A673 (cell line): ENCODE measurements at regions of chr7 and their contacts with region 1.

Region 1: GRCh38 chr7:24401628-24402593 is 117.9 kb downstream of the NPY start:
- DNase-seq: peak; percentile 41
- H3K4me3 ChIP-seq: peak overlapping the region; percentile 21
- H3K27ac ChIP-seq: no peak overlapping the region
- H3K4me1 ChIP-seq: peaks cover 39% of the 10 kb centered on the region
- H3K27me3 ChIP-seq: no peaks in the 10 kb centered on the region
- CTCF ChIP-seq: peak; percentile 65

Region 2: DNA sequence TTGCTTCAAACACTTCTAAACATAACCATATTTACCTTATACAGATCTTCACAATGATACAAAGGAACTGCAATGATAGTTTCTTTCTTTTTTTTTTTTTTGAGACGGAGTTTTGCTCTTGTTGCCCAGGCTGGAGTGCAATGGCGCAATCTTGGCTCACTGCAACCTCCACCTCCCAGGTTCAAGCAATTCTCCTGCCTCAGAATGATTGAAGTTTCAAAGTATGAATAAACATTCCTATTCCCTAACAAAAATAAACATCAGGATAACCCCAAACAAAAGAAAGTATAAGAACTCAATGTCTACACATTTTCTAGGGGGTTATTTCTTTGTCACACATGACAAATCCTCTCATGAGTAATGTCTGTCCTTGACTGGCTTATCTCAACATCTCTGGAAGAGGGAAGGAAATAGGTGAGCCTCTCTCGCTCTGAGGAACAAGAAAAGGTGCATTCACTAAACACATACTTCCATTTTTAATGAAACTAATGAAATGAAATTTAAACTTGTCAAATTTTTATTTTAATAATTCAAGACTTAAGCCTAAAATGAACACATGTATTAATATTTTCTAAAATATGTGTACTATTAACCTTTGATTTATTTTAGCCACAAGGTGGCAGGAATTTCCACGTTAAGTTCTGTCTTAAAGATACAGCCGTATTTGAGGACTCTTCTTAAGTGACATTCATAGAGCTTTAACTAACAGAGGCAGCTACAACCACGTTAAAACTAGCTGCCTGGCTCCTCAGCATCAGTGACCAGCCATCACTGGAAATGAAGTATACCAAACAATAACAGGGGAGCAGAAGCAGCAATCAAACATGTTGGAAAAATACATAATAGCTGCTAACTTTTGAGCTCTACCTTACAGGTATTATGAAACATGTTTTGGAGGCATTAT is 1044.5 kb before region 1 on chr7:
- CTCF ChIA-PET with region 1: no interaction called
- POLR2A ChIA-PET with region 1: no interaction called
- intact Hi-C with region 1: no loop called
- DNase-seq: peak; percentile 54
- H3K4me3 ChIP-seq: no peak overlapping the region
- H3K27ac ChIP-seq: no peak overlapping the region
- H3K4me1 ChIP-seq: peaks cover 4% of the 10 kb centered on the region
- H3K27me3 ChIP-seq: no peaks in the 10 kb centered on the region
- CTCF ChIP-seq: peak; percentile 60

Region 3: DNA sequence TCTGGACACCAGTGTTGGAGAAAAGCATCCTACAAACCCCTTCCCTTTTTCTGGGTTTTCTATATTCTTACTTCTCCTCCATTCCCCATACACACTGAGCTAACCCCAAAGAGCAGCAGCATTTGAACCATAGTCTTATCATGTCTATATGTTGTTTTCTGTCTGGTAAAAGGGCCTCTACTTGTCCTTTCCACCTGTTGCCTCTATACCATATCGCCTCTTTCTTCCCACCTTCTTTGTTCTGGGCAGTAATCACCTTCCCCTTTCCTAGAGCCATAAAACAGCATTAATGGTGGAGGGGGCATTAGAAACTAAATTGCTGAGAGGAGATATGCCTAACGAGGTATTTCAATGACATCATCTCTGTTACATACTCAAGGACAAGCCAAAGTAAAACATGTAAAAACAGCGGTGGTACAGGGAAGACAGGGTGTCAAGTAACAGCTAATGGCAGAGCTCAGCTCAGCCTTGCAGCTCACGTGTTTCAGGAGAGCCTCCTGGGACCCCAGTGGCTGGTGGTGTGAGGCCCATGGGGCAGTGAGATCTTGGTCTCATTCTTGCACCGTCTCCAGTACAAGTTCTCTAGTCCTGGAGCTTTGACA is 97.3 kb before region 1 on chr7:
- CTCF ChIA-PET with region 1: no interaction called
- POLR2A ChIA-PET with region 1: interaction called, 10 read pairs
- intact Hi-C with region 1: no loop called
- DNase-seq: no peak
- H3K4me3 ChIP-seq: no peak overlapping the region
- H3K27ac ChIP-seq: no peak overlapping the region
- H3K4me1 ChIP-seq: no peaks in the 10 kb centered on the region
- H3K27me3 ChIP-seq: no peaks in the 10 kb centered on the region
- CTCF ChIP-seq: no peak

Region 4: GRCh38 chr7:24477398-24478136 is 75.7 kb after region 1 on chr7:
- CTCF ChIA-PET with region 1: no interaction called
- POLR2A ChIA-PET with region 1: no interaction called
- intact Hi-C with region 1: no loop called
- DNase-seq: peak; percentile 73
- H3K4me3 ChIP-seq: no peak overlapping the region
- H3K27ac ChIP-seq: peak overlapping the region; percentile 62
- H3K4me1 ChIP-seq: peaks cover 39% of the 10 kb centered on the region
- H3K27me3 ChIP-seq: no peaks in the 10 kb centered on the region
- CTCF ChIP-seq: no peak

Region 5: DNA sequence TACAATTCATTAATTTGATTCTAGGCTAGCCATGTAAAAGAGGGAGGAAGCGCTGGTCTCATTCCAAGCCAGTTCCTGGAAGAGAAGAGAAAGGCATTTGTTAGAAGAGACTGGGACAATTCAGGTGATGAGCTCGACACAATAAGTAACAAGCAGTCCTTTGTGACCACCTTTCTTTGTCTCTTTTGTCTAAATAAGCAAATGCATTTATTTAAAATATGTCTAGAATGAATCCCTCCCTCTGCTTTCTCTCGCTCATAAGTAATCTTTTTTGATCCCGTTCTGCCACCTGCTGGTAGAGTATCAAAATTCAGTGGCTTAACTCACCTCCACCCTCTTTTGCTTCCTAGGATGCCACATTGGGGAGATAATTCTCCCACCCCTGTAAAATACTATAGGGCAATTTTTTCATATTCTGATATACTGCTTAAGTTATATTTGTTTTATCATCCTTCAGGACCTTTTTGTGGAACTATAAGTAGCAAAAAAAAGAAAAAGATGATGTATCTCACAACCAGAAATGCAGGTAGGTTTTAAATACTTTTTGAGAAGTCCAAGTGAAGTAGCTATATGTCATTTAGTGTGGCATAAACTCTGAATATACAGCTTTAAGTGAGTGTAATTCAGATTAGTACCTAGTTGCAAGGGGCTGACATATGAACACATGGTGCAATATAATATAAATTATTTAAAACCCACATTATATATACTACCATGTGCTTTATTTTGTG is 263.8 kb after region 1 on chr7:
- CTCF ChIA-PET with region 1: no interaction called
- POLR2A ChIA-PET with region 1: no interaction called
- intact Hi-C with region 1: loop called (anchors 2 kb)
- DNase-seq: peak; percentile 73
- H3K4me3 ChIP-seq: no peak overlapping the region
- H3K27ac ChIP-seq: no peak overlapping the region
- H3K4me1 ChIP-seq: peaks cover 30% of the 10 kb centered on the region
- H3K27me3 ChIP-seq: no peaks in the 10 kb centered on the region
- CTCF ChIP-seq: peak; percentile 74